HCT116 (cell line): ENCODE measurements at regions of chr10 and their contacts with region 1.

Region 1: GRCh38 chr10:73785221-73785720 is at the start of gene ZSWIM8:
- DNase-seq: peak; percentile 91
- ATAC-seq: peak; percentile 86
- H3K4me3 ChIP-seq: peak within 1 kb of the TSS; percentile 86 to 87
- H3K27ac ChIP-seq: peak within 1 kb of the TSS; percentile 60
- H3K4me1 ChIP-seq: peaks cover 14 to 31% of the 10 kb centered on the region in 2 experiments
- H3K27me3 ChIP-seq: no peaks in the 10 kb centered on the region
- CTCF ChIP-seq: no peak
- POLR2A ChIP-seq: peak; percentile 14
- RAD21 ChIP-seq: no peak
- total RNA-seq, gene ZSWIM8: 49.9 TPM

Region 2: GRCh38 chr10:72952642-72953158 is 832.6 kb before region 1 on chr10:
- CTCF ChIA-PET with region 1: no interaction called
- POLR2A ChIA-PET with region 1: no interaction called
- RAD21 ChIA-PET with region 1: no interaction called
- intact Hi-C with region 1: no loop called
- DNase-seq: no peak
- ATAC-seq: no peak
- H3K4me3 ChIP-seq: no peak overlapping the region
- H3K27ac ChIP-seq: no peak overlapping the region
- H3K4me1 ChIP-seq: no peaks in the 10 kb centered on the region
- H3K27me3 ChIP-seq: no peaks in the 10 kb centered on the region; the same call in 1 of the 2 replicates
- CTCF ChIP-seq: no peak
- POLR2A ChIP-seq: no peak
- RAD21 ChIP-seq: no peak

Region 3: GRCh38 chr10:73743905-73744663 is 41.2 kb before region 1 on chr10 and contains the start of gene SEC24C:
- CTCF ChIA-PET with region 1: no interaction called
- POLR2A ChIA-PET with region 1: no interaction called
- RAD21 ChIA-PET with region 1: no interaction called
- intact Hi-C with region 1: loop called (anchors 1 kb)
- DNase-seq: peak; percentile 93
- ATAC-seq: peak; percentile 89
- H3K4me3 ChIP-seq: peak within 1 kb of the TSS; percentile 84 to 98
- H3K27ac ChIP-seq: peak within 1 kb of the TSS; percentile 79
- H3K4me1 ChIP-seq: peaks cover 2 to 22% of the 10 kb centered on the region in 2 experiments; a peak in 3 of 4 replicates
- H3K27me3 ChIP-seq: no peaks in the 10 kb centered on the region
- CTCF ChIP-seq: no peak
- POLR2A ChIP-seq: peak; percentile 78
- RAD21 ChIP-seq: no peak
- total RNA-seq, gene SEC24C: 60.9 TPM

Region 4: GRCh38 chr10:73772280-73773151 is 12.8 kb before region 1 on chr10:
- CTCF ChIA-PET with region 1: interaction called, 3 read pairs
- POLR2A ChIA-PET with region 1: interaction called, 27 read pairs
- RAD21 ChIA-PET with region 1: no interaction called
- intact Hi-C with region 1: loop called (anchors 1 kb)
- DNase-seq: peak; percentile 52
- ATAC-seq: peak; percentile 82
- H3K4me3 ChIP-seq: peak overlapping the region; percentile 66 to 83
- H3K27ac ChIP-seq: peak overlapping the region; percentile 97
- H3K4me1 ChIP-seq: peaks cover 9 to 25% of the 10 kb centered on the region in 2 experiments
- H3K27me3 ChIP-seq: no peaks in the 10 kb centered on the region
- CTCF ChIP-seq: no peak; a peak in 1 of 6 replicates
- POLR2A ChIP-seq: peak; percentile 49
- RAD21 ChIP-seq: 0 out of 2 replicates have a peak, but pooled peaks have one; percentile 24

Region 5: GRCh38 chr10:73802276-73802991 is 17.2 kb after region 1 on chr10:
- CTCF ChIA-PET with region 1: no interaction called
- POLR2A ChIA-PET with region 1: no interaction called
- RAD21 ChIA-PET with region 1: no interaction called
- intact Hi-C with region 1: no loop called
- DNase-seq: no peak
- ATAC-seq: no peak
- H3K4me3 ChIP-seq: no peak overlapping the region
- H3K27ac ChIP-seq: no peak overlapping the region
- H3K4me1 ChIP-seq: no peaks in the 10 kb centered on the region
- H3K27me3 ChIP-seq: no peaks in the 10 kb centered on the region
- CTCF ChIP-seq: no peak
- POLR2A ChIP-seq: no peak
- RAD21 ChIP-seq: no peak